ENCODE measurements at regions of chr3 and their contacts with region 1.

Region 1: GRCh38 chr3:46909535-46910442 is 32.3 kb downstream of the PTH1R start:
- DNase-seq: peak; percentile 94
- ATAC-seq: peak; percentile 87
- H3K4me3 Mint-ChIP-seq: no peak overlapping the region
- H3K27ac Mint-ChIP-seq: no peak overlapping the region
- H3K4me1 Mint-ChIP-seq: no peaks in the 10 kb centered on the region
- H3K27me3 Mint-ChIP-seq: no peaks in the 10 kb centered on the region
- CTCF ChIP-seq: peak; percentile 85

Region 2: GRCh38 chr3:46705022-46705530 is 204.7 kb before region 1 on chr3:
- CTCF ChIA-PET with region 1: interaction called, 13 read pairs
- POLR2A ChIA-PET with region 1: no interaction called
- DNase-seq: peak; percentile 83
- ATAC-seq: peak; percentile 78
- H3K4me3 Mint-ChIP-seq: no peak overlapping the region
- H3K27ac Mint-ChIP-seq: no peak overlapping the region
- H3K4me1 Mint-ChIP-seq: peaks cover 11% of the 10 kb centered on the region
- H3K27me3 Mint-ChIP-seq: peaks cover 29% of the 10 kb centered on the region
- CTCF ChIP-seq: peak; percentile 97

Region 3: GRCh38 chr3:46845791-46846623 is 63.8 kb before region 1 on chr3:
- CTCF ChIA-PET with region 1: interaction called, 50 read pairs
- POLR2A ChIA-PET with region 1: interaction called, 3 read pairs
- DNase-seq: peak; percentile 80
- ATAC-seq: peak; percentile 86
- H3K4me3 Mint-ChIP-seq: peak overlapping the region; percentile 64; the same call in 1 of the 2 replicates
- H3K27ac Mint-ChIP-seq: no peak overlapping the region
- H3K4me1 Mint-ChIP-seq: peaks cover 13% of the 10 kb centered on the region
- H3K27me3 Mint-ChIP-seq: peaks cover 13% of the 10 kb centered on the region; the same call in 1 of the 2 replicates
- CTCF ChIP-seq: peak; percentile 44; the same call in 1 of the 2 replicates

Region 4: DNA sequence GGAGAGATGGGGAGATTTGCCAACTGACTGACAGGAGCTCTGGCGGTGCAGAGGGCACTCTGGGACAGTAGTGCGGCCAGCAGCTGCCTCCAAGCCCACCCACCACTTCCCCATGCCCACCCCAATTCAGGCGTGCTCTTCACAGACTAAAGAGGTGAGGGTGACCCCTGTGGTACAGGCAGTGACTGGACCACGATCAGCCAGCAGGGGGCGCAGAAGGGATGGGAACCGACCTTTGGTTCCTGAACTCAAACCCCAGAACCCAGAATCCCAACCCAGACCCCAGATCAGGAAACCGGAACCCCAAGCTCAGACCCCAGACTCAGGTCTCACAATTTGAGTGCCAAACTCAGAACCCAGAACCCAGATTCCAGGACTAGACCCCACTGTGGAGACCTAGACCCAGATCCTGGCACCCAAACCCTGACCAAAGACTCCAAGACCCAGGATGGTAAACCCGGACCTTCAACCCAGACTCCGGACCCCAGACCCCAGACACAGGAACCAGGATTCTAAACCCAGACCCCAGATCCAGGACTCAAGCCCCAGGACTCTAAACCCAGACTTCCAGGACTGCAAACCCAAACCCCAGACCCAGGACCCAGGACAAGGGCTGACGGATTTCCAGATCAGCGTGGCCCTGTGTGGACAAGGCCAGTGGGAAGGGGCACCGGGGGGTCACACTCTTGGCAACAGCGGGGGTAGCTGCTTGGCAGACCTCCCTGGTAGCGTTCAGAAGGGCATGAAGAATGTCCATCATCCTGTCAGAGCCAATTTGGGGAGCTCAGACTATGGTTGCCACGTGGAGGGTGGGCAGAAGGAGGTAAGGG is 42.9 kb before region 1 on chr3:
- CTCF ChIA-PET with region 1: interaction called, 39 read pairs
- POLR2A ChIA-PET with region 1: no interaction called
- DNase-seq: peak; percentile 90
- ATAC-seq: peak; percentile 69
- H3K4me3 Mint-ChIP-seq: no peak overlapping the region
- H3K27ac Mint-ChIP-seq: no peak overlapping the region
- H3K4me1 Mint-ChIP-seq: no peaks in the 10 kb centered on the region
- H3K27me3 Mint-ChIP-seq: no peaks in the 10 kb centered on the region
- CTCF ChIP-seq: peak; percentile 88

Region 5: DNA sequence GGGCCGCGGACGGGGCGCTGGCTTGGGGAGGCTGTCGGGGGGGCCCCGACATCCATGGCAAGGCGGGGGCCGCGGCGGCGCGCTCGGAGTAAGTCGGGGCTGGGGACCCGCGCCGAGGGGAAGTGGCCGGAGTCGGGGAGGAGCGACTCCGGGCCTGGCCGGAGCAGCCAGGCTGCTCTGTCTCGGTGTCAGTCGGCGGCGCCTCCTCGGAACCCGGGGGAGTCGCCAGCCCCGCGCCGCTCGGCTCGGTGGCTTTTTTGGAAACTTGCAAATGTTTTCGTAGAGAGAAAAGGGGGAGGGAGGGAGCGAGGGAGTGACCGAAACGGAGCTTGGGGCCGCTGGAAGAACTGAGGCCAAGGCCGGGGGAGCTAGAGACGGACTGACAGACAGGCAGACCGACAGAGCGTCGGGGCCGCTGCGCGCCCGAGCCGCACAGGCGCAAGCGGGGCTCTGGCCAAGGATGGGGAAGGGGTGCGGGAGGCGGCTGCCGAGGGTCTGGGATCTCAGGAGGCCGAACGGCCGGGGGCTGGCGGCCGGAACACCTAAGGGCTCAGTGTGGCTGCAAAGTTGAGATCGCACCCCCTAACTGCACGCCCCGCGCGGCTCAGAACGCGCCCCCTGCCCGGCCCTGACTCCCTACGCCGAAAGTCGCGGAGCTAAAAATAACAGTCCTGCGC is 27.3 kb before region 1 on chr3:
- CTCF ChIA-PET with region 1: interaction called, 27 read pairs
- POLR2A ChIA-PET with region 1: no interaction called
- DNase-seq: peak; percentile 50
- ATAC-seq: peak; percentile 27
- H3K4me3 Mint-ChIP-seq: peak overlapping the region; percentile 74
- H3K27ac Mint-ChIP-seq: no peak overlapping the region
- H3K4me1 Mint-ChIP-seq: peaks cover 25% of the 10 kb centered on the region
- H3K27me3 Mint-ChIP-seq: peaks cover 92% of the 10 kb centered on the region
- CTCF ChIP-seq: no peak

Region 6: DNA sequence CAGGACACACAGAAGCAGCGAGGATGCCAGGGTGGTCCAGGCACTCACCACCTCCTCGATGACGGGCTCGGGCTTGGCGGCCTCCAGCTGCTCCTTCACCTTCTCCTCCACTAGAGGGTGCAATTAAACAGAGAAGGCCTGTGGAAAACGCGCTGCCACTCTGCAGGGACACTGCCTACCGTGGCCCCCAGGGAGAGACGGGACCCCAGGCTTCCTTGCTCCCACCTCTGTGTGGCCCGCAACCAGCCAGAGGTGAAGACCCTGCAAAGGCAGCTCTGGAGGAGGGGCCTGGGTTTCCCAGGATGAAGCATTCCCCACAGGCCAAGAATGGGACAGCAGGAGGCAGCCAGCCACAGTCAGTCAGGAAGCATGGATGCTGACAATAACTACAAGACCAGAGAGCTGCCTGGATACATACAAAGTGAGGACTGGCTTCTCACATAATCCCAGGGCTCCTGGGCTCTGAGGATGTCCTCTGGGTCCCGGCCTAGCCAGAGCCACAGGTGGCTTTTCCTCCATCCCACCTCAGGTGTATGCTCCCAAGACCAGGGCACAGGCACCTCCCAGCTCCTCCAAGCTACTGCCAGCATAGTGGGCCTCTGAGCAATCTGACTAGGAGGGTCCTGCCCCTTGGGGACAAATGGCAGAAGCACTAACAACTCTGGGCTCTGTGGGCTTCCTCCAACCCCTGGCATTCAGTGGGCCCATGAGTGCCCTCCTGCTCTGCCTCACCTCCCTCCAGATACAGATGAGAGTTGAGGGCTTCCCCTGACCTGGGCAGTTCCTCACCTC is 14.0 kb after region 1 on chr3:
- CTCF ChIA-PET with region 1: interaction called, 23 read pairs
- POLR2A ChIA-PET with region 1: no interaction called
- DNase-seq: peak; percentile 69
- ATAC-seq: peak; percentile 84
- H3K4me3 Mint-ChIP-seq: no peak overlapping the region
- H3K27ac Mint-ChIP-seq: no peak overlapping the region
- H3K4me1 Mint-ChIP-seq: no peaks in the 10 kb centered on the region
- H3K27me3 Mint-ChIP-seq: no peaks in the 10 kb centered on the region; the same call in 1 of the 2 replicates
- CTCF ChIP-seq: peak; percentile 37; the same call in 1 of the 2 replicates

Region 7: DNA sequence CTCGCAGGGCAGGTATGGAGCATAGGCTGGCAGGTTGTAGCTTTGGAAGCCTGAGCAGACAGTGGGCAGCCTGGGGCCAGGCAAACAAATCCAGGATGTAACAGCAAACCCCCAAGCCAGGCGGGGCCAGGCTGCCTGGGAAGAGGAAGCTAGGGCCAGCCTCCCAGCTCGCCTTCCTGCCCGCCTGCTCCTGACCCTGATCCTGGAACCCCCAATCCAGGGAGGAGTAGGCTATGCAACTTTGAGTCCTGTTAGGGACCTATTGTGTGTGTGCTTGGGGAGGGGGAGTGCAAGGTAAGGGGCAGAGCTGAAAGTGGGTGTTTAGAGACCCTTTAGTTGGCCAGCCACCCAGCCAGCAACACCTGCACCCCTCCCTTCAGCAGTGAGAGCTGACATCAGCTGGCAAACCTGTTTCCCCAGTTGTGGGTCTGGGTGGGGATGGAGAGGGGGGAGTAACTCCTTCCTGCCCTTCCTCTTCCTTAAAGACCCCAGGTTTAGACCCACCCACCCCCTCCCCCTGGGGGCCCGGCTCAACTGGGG is 72.2 kb after region 1 on chr3:
- CTCF ChIA-PET with region 1: interaction called, 10 read pairs
- POLR2A ChIA-PET with region 1: no interaction called
- DNase-seq: peak; percentile 64
- ATAC-seq: peak; percentile 8
- H3K4me3 Mint-ChIP-seq: peak overlapping the region; percentile 51
- H3K27ac Mint-ChIP-seq: no peak overlapping the region
- H3K4me1 Mint-ChIP-seq: peaks cover 36% of the 10 kb centered on the region
- H3K27me3 Mint-ChIP-seq: peaks cover 5% of the 10 kb centered on the region
- CTCF ChIP-seq: no peak